ENCODE measurements at regions of chr13 and their contacts with region 1.

Region 1: DNA sequence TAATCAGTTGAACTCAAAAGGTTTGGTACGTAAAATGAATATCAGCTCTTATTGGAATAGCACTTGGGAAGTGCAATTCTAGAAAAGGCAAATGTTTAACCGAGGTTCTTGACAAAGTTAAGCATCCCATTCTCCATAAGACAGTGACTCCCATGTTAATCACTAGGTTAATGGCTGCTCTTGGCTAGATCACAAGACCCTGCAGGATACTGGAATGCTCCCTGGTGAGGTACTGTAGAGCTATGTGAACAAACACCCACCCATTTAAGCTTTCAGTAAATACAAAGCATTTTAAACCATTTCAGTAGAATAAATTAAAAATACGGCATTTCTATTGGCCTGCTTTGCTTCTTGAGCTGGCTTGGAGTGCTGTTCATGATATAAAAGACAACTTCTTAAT is 56.5 kb downstream of the TDRD3 start:
- DNase-seq: peak; percentile 57
- H3K4me3 ChIP-seq: no peak overlapping the region
- H3K27ac ChIP-seq: no peak overlapping the region
- H3K4me1 ChIP-seq: peaks cover 7% of the 10 kb centered on the region; the same call in 1 of the 2 replicates
- H3K27me3 ChIP-seq: no peaks in the 10 kb centered on the region

Region 2: GRCh38 chr13:60679928-60680694 is 226.6 kb after region 1 on chr13:
- in situ Hi-C with region 1: no loop called
- DNase-seq: no peak
- H3K4me3 ChIP-seq: no peak overlapping the region
- H3K27ac ChIP-seq: no peak overlapping the region
- H3K4me1 ChIP-seq: no peaks in the 10 kb centered on the region
- H3K27me3 ChIP-seq: no peaks in the 10 kb centered on the region

Region 3: DNA sequence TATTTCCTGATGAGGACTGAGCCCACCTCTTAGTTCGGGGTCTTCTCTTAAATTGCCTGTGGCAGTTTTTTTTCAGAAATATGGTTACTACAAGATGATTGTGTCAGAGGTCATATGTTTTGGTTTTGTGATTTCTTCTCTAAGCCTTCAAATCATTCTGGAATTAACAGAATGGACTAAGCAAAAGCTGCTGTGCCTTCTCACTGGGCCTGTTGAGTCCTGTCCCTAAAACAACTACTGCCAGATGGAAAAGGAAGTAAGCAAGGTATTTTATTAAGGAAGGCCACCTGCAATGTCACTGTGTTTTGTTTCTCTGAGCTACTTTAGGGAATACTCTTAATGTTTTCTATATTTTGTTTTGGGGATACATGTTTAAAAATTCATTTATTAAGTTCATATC is 491.4 kb after region 1 on chr13:
- in situ Hi-C with region 1: no loop called
- DNase-seq: no peak
- H3K4me3 ChIP-seq: no peak overlapping the region
- H3K27ac ChIP-seq: no peak overlapping the region
- H3K4me1 ChIP-seq: no peaks in the 10 kb centered on the region
- H3K27me3 ChIP-seq: no peaks in the 10 kb centered on the region

Region 4: DNA sequence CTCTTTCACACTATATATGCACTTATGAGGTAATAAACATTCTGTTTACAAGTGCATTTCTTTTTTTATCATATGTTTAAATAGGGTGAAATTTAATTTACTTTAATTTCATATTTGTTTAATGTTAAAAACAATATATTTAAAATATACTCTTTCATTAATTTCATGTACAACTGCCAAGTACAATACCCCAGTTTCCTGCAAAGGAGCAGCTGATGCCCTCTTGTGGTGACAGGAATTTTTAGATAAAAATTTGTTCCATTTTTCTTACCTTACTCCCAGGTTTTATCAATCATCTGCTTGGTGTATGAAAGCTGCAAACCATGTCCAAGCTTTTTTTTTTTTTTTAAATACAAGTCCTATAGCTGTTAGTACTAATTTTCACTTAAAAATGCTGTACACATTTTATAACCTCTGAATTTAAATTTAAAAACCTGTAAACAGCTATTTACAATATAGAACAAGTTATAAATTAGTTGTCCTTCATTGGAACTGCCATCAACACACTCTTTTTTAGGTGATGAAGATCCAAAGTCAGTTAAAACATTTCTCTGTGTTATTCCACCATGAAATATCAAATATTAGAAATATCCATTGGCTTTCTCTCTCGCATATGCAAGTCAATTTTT is 957.3 kb after region 1 on chr13:
- in situ Hi-C with region 1: loop called (anchors 25 kb)
- DNase-seq: peak; percentile 32
- H3K4me3 ChIP-seq: no peak overlapping the region
- H3K27ac ChIP-seq: no peak overlapping the region
- H3K4me1 ChIP-seq: no peaks in the 10 kb centered on the region
- H3K27me3 ChIP-seq: peaks cover 10% of the 10 kb centered on the region; the same call in 1 of the 2 replicates

Measured in GM23248 (cell line).